ENCODE measurements at regions of chr4 and their contacts with region 1.

Region 1: DNA sequence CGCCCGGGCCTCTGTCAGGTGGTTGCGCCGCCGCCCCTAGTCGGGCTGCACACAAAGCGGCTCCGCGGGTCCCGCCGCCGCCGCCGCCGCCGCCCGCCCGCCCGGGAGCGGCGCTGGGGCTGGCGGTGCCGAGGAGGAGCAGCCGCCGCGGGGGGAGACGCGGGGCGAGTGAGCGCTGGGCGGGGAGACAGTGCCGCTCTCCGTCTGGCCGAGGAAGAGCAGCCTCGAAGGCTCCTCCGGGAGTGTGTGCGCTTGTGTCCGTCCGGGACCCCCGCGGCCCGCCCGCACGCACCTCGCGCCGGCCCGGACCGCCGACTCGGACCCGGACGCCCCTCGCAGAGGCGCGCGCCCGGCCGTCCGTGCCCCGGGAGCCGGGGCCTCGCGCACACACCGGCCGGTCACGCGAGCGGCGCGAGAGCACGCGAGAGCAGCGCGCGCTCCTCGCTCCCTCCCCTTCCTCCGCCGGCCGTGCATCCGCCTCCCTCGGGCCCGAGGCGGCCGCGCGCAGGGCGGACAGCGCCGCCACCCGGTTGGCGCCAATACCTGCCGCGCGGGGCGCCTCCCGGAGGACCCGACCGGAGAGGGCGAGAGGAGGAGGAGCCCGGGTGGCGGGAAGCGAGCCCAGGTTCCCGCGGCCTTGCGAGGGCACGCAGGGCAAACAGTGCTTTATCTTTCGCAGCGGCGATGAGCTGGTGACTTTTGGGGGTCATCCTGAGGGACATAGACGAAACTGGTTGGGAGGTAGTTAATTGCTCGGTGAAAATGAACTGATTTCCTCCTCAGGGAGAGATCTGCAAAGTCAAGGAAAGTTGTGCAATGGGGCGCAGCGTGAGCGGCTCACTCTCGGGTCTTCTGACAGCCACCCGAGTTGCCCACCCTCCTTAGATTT is at the start of gene PDS5A:
- DNase-seq: peak; percentile 93
- H3K4me3 ChIP-seq: peak within 1 kb of the TSS; percentile 66 to 99 (median 96)
- H3K27ac ChIP-seq: peak within 1 kb of the TSS; percentile 95 to 98 (median 96)
- H3K4me1 ChIP-seq: peaks cover 0 to 28% (median 26%) of the 10 kb centered on the region in 4 donors
- H3K27me3 ChIP-seq: no peaks in the 10 kb centered on the region
- CTCF ChIP-seq: peak; percentile 38 to 80 (median 65)
- EP300 ChIP-seq: no peak
- POLR2A ChIP-seq: no peak
- total RNA-seq, gene PDS5A: 57.1 to 69.6 (median 63.5) TPM

Region 2: GRCh38 chr4:39044364-39044955 is 933.3 kb before region 1 on chr4:
- intact Hi-C with region 1: loop called (anchors 5 kb)
- DNase-seq: peak; percentile 97
- H3K4me3 ChIP-seq: peak overlapping the region; percentile 49 to 98 (median 93)
- H3K27ac ChIP-seq: peak overlapping the region; percentile 92 to 100 (median 97)
- H3K4me1 ChIP-seq: peaks cover 0 to 59% (median 44%) of the 10 kb centered on the region in 4 donors
- H3K27me3 ChIP-seq: no peaks in the 10 kb centered on the region
- CTCF ChIP-seq: no peak
- EP300 ChIP-seq: no peak
- POLR2A ChIP-seq: peak in 1 of 2 donors; percentile 0

Region 3: DNA sequence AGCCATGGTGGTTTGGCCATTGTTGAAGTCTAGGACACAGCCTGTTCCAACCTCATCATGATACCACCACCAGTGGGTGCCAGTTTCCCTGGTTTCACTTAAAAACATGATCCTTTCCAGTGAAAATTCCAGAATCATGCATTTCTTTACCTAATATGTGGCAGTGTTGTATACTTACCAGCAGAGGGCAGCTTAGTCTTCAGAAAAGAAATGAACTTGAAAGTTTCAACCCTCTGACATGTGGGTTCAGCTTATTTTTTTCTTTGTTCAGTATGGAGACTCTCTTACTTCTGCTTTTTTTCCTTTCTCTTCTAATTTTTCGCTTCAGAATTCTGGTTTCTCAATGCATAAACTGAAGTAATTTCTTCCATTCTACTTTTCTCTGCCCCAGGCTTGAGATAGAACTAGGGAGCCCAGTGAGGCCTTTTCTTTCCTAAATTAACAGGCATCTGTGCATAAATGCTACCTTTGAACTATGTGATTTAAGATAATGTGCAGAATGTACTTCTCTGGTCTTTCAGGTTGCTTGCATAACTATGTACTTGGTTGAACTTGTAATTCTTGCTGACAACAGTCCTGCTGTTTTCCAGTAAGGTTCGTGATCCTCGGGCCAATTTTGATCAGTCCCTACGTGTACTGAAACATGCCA is 508.2 kb before region 1 on chr4:
- intact Hi-C with region 1: loop called (anchors 2 kb)
- DNase-seq: no peak
- H3K4me3 ChIP-seq: no peak overlapping the region
- H3K27ac ChIP-seq: peak overlapping the region in 3 of 4 donors; percentile 37 to 59 (median 50)
- H3K4me1 ChIP-seq: peaks cover 0 to 8% (median 0%) of the 10 kb centered on the region in 4 donors
- H3K27me3 ChIP-seq: no peaks in the 10 kb centered on the region
- CTCF ChIP-seq: peak; percentile 63 to 85 (median 74)
- EP300 ChIP-seq: no peak
- POLR2A ChIP-seq: no peak

Region 4: GRCh38 chr4:39527273-39528060 is 450.3 kb before region 1 on chr4 and contains the start of gene UGDH:
- intact Hi-C with region 1: loop called (anchors 2 kb)
- DNase-seq: peak; percentile 98
- H3K4me3 ChIP-seq: peak within 1 kb of the TSS; percentile 70 to 92 (median 90)
- H3K27ac ChIP-seq: peak within 1 kb of the TSS; percentile 89 to 98 (median 97)
- H3K4me1 ChIP-seq: peaks cover 0 to 28% (median 21%) of the 10 kb centered on the region in 4 donors
- H3K27me3 ChIP-seq: no peaks in the 10 kb centered on the region
- CTCF ChIP-seq: no peak
- EP300 ChIP-seq: peak in 1 of 4 donors; percentile 9
- POLR2A ChIP-seq: peak; percentile 79 to 92
- total RNA-seq, gene UGDH: 33.4 to 51.2 (median 43.0) TPM

Region 5: GRCh38 chr4:39697740-39698423 is 279.9 kb before region 1 on chr4 and contains the start of gene UBE2K:
- intact Hi-C with region 1: loop called (anchors 1 kb)
- DNase-seq: peak; percentile 94
- H3K4me3 ChIP-seq: peak within 1 kb of the TSS; percentile 86 to 97 (median 88)
- H3K27ac ChIP-seq: peak within 1 kb of the TSS; percentile 93 to 96 (median 94)
- H3K4me1 ChIP-seq: peaks cover 0 to 50% (median 32%) of the 10 kb centered on the region in 4 donors
- H3K27me3 ChIP-seq: no peaks in the 10 kb centered on the region
- CTCF ChIP-seq: no peak
- EP300 ChIP-seq: no peak
- POLR2A ChIP-seq: peak; percentile 60 to 76
- total RNA-seq, gene UBE2K: 25.2 to 37.8 (median 31.4) TPM

Region 6: GRCh38 chr4:39922389-39922788 is 55.3 kb before region 1 on chr4:
- intact Hi-C with region 1: loop called (anchors 5 kb)
- DNase-seq: no peak
- H3K4me3 ChIP-seq: no peak overlapping the region
- H3K27ac ChIP-seq: no peak overlapping the region
- H3K4me1 ChIP-seq: no peaks in the 10 kb centered on the region
- H3K27me3 ChIP-seq: no peaks in the 10 kb centered on the region
- CTCF ChIP-seq: no peak
- EP300 ChIP-seq: no peak
- POLR2A ChIP-seq: no peak

Region 7: DNA sequence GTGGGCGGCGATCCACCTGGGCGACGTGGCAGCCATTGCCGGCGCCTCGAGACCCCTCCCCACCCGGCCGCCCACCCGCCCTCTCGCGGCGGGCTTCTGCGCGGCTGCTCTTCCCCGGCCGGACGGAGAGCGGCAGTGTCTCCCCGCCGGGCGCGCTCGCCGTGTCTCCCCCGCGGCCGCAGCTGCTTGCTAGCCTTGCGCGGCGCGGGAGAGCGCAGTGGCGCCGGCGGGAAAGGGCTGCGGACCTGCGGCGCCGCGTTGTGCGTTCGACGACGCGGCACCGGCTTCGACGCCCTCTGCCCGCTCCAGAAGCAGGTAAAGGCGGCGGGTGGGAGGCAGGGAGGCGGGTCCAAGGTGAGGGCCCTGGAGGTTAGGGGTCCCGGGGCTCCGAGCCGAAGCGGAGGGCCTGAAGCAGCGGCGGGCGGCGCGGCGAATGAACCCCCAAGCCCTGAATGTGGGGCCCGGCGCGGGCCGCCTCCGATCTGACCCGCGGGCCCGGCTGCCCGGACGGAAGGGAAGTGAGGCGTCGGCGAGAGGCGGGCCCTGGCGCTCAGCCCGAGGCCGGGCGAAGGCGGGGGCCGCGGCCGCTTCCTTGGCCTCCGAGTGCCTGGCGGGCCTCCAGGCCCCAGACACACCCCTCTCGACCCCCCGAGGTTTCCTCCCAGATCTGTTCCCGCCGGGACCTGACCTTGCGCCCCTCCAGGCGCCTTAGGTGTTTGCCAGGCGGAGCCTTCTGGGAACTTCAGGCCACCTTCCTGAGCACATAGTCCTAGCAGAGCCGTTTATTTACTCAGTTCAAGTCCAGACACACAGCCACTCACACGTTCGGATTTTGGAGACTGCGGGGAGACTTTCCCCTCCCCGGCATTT is 79.2 kb after region 1 on chr4 and contains the start of gene N4BP2:
- intact Hi-C with region 1: loop called (anchors 1 kb)
- DNase-seq: peak; percentile 89
- H3K4me3 ChIP-seq: peak within 1 kb of the TSS; percentile 76 to 88 (median 86)
- H3K27ac ChIP-seq: peak within 1 kb of the TSS; percentile 98 to 100 (median 100)
- H3K4me1 ChIP-seq: peaks cover 0 to 27% (median 21%) of the 10 kb centered on the region in 4 donors
- H3K27me3 ChIP-seq: no peaks in the 10 kb centered on the region
- CTCF ChIP-seq: peak in 3 of 4 experiments; percentile 21 to 72 (median 25)
- EP300 ChIP-seq: no peak
- POLR2A ChIP-seq: peak; percentile 70 to 73
- total RNA-seq, gene N4BP2: 7.9 to 11.9 (median 9.2) TPM

Measured in sigmoid colon (tissue), 7 donors.